Activated CD8-positive, alpha-beta T cell treated with anti-CD3 and anti-CD28 coated beads for 36 hours (primary cell): ENCODE measurements at regions of chr12 and their contacts with region 1.

Region 1: GRCh38 chr12:55955800-55956508 is 9.9 kb downstream of the PMEL start:
- DNase-seq: peak; percentile 75
- ATAC-seq: peak; percentile 74
- H3K4me3 Mint-ChIP-seq: no peak overlapping the region
- H3K27ac Mint-ChIP-seq: peak overlapping the region; percentile 60
- H3K4me1 Mint-ChIP-seq: peaks cover 15% of the 10 kb centered on the region
- H3K27me3 Mint-ChIP-seq: no peaks in the 10 kb centered on the region
- CTCF ChIP-seq: peak; percentile 41

Region 2: DNA sequence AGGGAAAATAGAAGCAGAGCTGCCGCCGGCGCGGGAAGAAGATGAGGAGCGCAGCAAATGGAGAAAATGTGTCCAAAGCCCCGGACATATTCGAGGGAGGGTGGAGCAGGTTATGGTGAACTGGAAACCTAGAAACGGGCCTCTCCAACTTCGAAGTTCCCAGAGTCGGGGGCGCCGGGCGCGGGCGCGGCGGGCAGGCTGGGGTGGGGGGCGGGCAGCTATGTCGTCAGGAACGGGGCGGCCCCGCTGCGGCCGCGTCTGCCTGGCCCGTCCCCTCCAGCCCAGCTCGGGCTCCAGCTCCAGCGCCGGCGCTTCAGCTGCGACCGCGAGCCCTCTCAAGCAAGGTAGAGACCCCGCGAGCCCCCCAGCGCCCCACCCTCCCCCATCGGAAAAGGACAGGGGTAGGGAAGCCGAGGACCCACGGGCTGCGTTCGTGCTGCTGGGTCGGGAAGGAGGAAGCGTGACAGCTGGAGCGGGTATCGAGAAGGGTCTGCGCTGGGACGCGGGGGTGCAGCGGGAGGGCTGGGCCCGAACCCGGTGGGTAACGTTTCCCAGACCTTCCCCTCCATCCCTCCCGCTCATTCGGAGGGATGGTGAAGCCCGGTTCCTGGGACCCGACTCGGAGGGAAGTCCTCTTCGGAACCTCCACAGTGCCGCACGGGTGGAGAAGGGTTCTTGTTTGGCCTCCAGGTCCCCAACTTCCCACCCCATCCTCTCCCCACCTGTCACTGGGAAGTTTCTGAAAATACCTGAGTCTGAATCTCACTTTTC is 24.0 kb before region 1 on chr12:
- CTCF ChIA-PET with region 1: interaction called, 3 read pairs
- POLR2A ChIA-PET with region 1: interaction called, 11 read pairs
- intact Hi-C with region 1: no loop called
- DNase-seq: peak; percentile 44
- ATAC-seq: no peak
- H3K4me3 Mint-ChIP-seq: peak overlapping the region; percentile 99
- H3K27ac Mint-ChIP-seq: peak overlapping the region; percentile 99
- H3K4me1 Mint-ChIP-seq: peaks cover 52% of the 10 kb centered on the region
- H3K27me3 Mint-ChIP-seq: no peaks in the 10 kb centered on the region
- CTCF ChIP-seq: no peak

Region 3: GRCh38 chr12:55966408-55967281 is 10.7 kb after region 1 on chr12 and contains the start of gene CDK2:
- CTCF ChIA-PET with region 1: interaction called, 3 read pairs
- POLR2A ChIA-PET with region 1: interaction called, 46 read pairs
- intact Hi-C with region 1: no loop called
- DNase-seq: peak; percentile 96
- ATAC-seq: peak; percentile 98
- H3K4me3 Mint-ChIP-seq: peak within 1 kb of the TSS; percentile 98
- H3K27ac Mint-ChIP-seq: peak within 1 kb of the TSS; percentile 89
- H3K4me1 Mint-ChIP-seq: peaks cover 22% of the 10 kb centered on the region
- H3K27me3 Mint-ChIP-seq: no peaks in the 10 kb centered on the region
- CTCF ChIP-seq: no peak
- total RNA-seq, gene CDK2: 86.7 to 90.1 TPM

Region 4: DNA sequence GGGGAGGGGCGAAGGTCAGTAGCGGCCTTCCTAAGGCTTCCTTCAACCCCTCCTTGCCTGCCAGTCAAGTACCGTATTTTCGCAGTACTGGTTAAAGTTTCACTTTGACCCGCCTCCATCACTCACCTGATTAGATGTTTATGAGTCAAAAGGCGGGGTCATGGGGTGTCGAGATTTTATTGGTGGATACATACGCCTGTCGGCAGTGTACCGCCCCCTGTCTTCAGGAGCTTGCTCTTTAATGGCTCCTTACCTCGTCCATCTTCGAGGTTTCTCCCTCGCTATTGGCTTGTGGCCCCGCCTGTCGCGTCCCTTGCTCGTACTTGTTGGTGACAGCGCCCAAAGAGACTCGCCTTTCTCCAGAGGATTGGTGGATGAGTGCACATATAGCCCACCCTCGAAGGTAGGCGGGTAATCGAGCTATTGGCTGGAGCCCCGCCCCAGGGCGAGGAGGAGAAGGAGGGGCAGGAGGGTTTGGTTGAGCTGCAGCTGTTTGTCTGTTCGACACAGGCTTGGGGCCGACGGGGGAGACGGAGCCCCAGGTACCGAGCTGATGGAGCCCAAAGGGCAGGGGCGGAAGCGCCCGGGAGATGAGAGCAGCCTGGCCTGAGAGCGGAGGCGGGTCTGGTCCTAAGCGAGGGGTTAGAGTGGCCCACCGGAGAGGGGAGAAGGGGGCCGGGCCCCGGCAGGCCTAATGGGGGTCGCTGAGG is 17.8 kb after region 1 on chr12 and contains the start of gene RAB5B:
- CTCF ChIA-PET with region 1: interaction called, 3 read pairs
- POLR2A ChIA-PET with region 1: interaction called, 46 read pairs
- intact Hi-C with region 1: no loop called
- DNase-seq: peak; percentile 99
- ATAC-seq: peak; percentile 93
- H3K4me3 Mint-ChIP-seq: no peak within 1 kb of the TSS
- H3K27ac Mint-ChIP-seq: no peak within 1 kb of the TSS
- H3K4me1 Mint-ChIP-seq: peaks cover 24% of the 10 kb centered on the region
- H3K27me3 Mint-ChIP-seq: no peaks in the 10 kb centered on the region
- CTCF ChIP-seq: no peak
- total RNA-seq, gene RAB5B: 26.0 to 32.4 TPM

Region 5: DNA sequence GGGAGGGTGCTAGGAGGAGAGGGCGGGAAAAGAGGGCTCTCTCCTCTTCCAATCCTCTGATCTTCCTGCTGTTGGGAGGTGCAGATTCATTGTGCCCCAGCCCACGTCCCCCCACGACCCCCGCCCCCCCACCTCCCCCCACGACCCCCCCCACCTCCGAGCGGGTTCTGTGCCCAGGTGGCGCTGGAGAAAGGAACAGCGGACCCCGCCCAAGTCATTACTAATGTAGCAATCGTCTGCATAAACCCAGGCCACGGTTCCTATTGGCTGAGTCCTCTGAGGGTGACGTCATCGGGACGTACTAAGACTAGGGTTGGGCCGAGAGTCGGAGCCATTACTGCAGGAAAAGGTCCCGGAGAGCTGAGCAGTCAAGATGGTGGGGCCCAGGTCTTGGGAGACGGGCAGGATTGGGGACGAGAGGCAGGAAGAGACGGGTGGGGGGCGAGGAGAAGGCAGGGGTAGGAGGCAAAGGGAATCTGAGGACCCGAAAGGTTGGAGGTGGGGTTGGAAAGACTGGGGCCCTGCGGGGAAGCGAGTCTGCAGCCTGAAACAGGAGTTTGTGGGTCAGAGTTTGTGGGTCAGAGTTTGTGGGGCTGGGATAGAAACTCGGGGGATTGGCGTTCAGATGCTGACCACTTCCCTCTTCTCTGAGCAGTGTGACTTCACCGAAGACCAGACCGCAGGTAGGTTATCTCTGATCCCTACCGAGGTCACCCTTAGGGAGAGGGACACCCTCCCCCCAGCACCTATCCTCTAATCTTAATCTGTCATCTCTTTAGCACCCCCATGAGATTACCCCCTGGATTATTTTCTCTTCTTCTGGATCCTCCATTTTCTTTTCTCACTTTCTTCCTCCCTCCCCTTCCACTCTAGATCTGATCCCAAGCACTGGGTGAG is 202.3 kb after region 1 on chr12 and contains the start of gene MYL6:
- CTCF ChIA-PET with region 1: no interaction called
- POLR2A ChIA-PET with region 1: no interaction called
- intact Hi-C with region 1: no loop called
- DNase-seq: peak; percentile 98
- ATAC-seq: peak; percentile 87
- H3K4me3 Mint-ChIP-seq: peak within 1 kb of the TSS; percentile 95
- H3K27ac Mint-ChIP-seq: peak within 1 kb of the TSS; percentile 98
- H3K4me1 Mint-ChIP-seq: peaks cover 33% of the 10 kb centered on the region
- H3K27me3 Mint-ChIP-seq: no peaks in the 10 kb centered on the region
- CTCF ChIP-seq: no peak
- total RNA-seq, gene MYL6: 647 to 663 TPM